ENCODE measurements at regions of chr2 and their contacts with region 1.

Region 1: DNA sequence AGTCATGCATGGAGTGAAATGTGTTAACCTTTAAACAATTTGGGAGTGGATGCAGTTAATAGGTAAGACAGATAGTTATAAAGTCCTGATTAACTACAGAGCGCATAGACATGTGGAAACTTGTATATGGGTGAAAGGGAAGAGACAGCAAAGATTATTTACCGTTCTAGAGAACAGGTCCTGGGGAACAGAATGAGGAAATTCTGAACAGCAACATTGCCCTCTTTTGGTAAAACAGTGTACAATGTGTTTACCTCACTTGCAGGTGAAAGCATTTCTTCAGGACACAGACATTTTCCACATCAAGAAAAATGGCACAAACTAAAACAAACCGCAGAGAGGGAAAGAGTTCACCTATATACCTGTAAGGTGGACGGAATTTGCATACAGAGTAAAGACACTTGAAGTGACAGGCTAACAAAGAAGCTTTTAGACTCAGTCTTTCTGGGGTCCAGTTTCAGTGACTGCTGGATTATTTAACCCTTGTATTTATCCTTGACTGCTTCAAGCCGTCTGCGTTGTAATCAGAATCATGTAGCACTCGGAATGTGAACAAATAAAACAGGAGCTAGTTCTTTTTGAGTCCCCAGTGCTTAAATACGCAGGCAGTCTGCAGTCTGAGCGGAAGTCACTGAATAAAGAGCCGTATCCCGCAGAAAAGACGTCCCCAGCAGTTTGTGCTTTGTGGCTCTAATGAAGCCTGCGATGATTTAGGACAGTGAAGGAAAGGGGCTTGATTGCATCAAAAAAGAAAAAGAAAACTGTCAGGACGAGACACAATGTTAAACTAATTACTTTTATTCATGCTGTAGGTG is 364.8 kb upstream of the GALNT5 start:
- DNase-seq: no peak
- ATAC-seq: peak in 6 of 8 donors; percentile 55 to 76 (median 63)
- H3K4me3 ChIP-seq: peak overlapping the region in 8 of 10 donors; percentile 15 to 46 (median 35)
- H3K27ac ChIP-seq: no peak overlapping the region
- H3K4me1 ChIP-seq: peaks cover 0 to 14% (median 0%) of the 10 kb centered on the region in 9 donors
- H3K27me3 ChIP-seq: peaks cover 0 to 10% (median 0%) of the 10 kb centered on the region in 7 donors
- CTCF ChIP-seq: peak in 7 of 9 donors; percentile 46 to 61 (median 55)

Region 2: DNA sequence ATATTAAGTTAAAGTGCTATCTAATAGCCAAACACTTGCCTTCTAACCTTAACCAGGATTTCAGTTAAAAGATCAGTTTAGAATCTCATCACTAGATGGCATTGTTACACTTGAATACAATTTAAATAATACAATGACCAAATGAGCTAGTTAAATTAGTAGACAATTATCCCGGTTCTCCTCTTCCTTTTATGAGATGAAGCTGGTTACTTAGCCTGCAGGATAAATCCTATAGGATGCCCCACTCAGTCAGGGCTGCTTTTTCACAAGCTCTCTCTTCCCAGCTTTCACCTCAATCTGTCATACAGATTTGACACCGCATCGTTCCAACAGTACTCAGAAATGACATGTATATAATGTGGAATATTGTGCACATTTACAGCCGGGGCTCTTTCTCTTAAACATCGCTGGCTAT is 1515.4 kb before region 1 on chr2:
- intact Hi-C with region 1: loop called in 1 of 10 experiments (anchors 10 kb)
- DNase-seq: no peak
- ATAC-seq: no peak
- H3K4me3 ChIP-seq: no peak overlapping the region
- H3K27ac ChIP-seq: no peak overlapping the region
- H3K4me1 ChIP-seq: no peaks in the 10 kb centered on the region
- H3K27me3 ChIP-seq: peaks cover 0 to 5% (median 0%) of the 10 kb centered on the region in 7 donors
- CTCF ChIP-seq: peak in 7 of 9 donors; percentile 25 to 53 (median 41)

Region 3: DNA sequence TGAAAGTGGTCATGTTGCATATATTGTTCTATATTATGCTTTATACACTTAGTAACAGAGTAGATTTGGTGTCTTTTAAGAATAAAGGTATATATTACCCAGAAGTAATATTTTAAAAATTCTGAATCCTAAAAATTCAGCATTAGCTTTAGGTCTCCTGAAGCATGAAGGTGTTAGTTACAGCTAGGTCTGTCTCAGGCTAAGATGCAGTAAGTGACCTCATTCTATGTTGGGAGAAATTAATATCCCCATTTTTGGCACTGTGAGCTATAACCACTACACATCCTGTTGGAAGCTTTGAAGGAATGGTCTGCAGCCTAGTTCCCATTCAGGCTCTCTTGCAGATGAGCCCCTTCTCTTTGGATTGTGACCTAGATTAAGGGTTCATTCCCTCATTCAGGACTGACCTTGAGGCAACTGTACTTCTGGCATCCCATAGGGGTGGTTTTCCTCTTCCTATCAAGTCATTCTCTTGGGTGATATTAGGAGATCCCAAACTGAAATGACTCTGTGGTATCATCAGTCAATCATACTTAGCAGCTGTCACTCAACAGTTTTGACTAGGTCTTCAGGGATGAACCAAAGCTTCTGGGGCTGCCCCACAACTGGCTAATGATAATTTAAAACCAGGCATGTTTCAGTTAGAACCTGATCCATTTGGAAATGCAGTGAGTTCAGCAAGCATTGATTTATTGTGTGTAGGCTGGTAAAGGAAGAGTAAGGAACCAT is 338.8 kb before region 1 on chr2:
- intact Hi-C with region 1: no loop called
- DNase-seq: no peak
- ATAC-seq: no peak
- H3K4me3 ChIP-seq: no peak overlapping the region
- H3K27ac ChIP-seq: no peak overlapping the region
- H3K4me1 ChIP-seq: no peaks in the 10 kb centered on the region
- H3K27me3 ChIP-seq: no peaks in the 10 kb centered on the region
- CTCF ChIP-seq: no peak

Region 4: DNA sequence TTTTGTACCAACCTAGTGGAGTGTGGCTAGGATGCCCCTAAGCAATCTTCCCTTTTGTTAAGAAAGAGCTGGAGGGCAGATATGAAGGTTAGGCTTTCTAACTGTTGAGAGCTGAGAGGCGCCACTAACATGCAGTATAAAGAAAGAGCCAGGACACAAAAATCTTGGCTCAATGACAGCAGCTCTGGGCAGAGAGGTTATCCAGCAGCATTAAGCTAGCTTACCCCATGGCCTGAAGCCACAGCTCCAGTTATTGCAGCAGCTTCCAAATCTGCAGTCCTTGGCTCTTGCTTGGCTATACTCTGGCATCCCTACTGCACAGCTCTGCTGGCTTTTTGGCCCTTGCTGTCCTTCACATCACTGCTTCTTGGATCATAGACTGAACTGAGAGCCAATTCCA is 243.1 kb before region 1 on chr2:
- intact Hi-C with region 1: loop called in 3 of 10 experiments (anchors 2 to 5 kb)
- DNase-seq: peak; percentile 43 to 80
- ATAC-seq: peak; percentile 92 to 100 (median 98)
- H3K4me3 ChIP-seq: no peak overlapping the region
- H3K27ac ChIP-seq: peak overlapping the region in 4 of 10 donors; percentile 26 to 58 (median 43)
- H3K4me1 ChIP-seq: peaks cover 0 to 12% (median 0%) of the 10 kb centered on the region in 9 donors
- H3K27me3 ChIP-seq: no peaks in the 10 kb centered on the region
- CTCF ChIP-seq: peak in 2 of 9 donors; percentile 27 to 31

Region 5: DNA sequence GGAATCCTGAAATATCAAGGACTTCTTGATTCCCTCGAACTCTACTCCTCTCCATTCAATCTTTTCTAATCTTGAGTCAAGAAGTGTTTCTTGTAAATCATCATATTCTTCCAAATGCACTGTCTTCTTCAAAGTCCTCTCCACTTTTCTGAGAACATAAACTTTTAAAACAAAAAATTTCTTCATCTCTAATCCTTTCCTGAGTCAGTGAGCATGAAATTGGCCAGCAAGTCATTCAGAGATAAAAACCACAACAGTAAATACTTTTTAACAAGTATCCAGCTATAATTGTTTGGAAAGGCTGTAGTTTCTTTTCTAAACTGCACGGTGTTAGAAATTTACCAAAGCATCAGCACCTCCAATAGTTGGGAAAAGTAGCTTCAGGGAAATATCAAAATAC is 52.2 kb after region 1 on chr2:
- intact Hi-C with region 1: loop called in 1 of 10 experiments (anchors 1 kb)
- DNase-seq: no peak
- ATAC-seq: no peak
- H3K4me3 ChIP-seq: no peak overlapping the region
- H3K27ac ChIP-seq: no peak overlapping the region
- H3K4me1 ChIP-seq: no peaks in the 10 kb centered on the region
- H3K27me3 ChIP-seq: no peaks in the 10 kb centered on the region
- CTCF ChIP-seq: no peak

Region 6: DNA sequence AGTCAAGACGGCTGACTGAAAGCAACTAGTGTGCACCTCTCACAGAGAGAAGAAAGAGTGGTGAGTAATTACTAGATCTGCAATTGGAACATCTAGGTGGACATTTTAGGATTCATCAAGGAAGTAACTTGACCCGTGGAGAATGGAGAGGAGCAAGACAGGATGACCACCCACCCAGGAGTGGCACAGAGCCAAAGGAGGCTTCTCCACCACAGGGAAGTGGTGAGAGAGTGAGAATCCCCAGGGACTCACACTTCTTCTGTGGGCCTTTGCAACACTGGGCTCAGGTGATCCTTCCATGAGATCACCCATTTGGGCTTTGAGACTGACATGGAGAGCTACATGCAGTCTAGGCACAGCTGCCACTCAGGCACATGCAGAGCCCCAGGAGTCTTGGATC is 232.1 kb after region 1 on chr2:
- intact Hi-C with region 1: no loop called
- DNase-seq: no peak
- ATAC-seq: no peak
- H3K4me3 ChIP-seq: no peak overlapping the region
- H3K27ac ChIP-seq: no peak overlapping the region
- H3K4me1 ChIP-seq: no peaks in the 10 kb centered on the region
- H3K27me3 ChIP-seq: peaks cover 0 to 4% (median 0%) of the 10 kb centered on the region in 7 donors
- CTCF ChIP-seq: no peak